B cell (primary cell): ENCODE measurements at regions of chr1 and their contacts with region 1.

Region 1: DNA sequence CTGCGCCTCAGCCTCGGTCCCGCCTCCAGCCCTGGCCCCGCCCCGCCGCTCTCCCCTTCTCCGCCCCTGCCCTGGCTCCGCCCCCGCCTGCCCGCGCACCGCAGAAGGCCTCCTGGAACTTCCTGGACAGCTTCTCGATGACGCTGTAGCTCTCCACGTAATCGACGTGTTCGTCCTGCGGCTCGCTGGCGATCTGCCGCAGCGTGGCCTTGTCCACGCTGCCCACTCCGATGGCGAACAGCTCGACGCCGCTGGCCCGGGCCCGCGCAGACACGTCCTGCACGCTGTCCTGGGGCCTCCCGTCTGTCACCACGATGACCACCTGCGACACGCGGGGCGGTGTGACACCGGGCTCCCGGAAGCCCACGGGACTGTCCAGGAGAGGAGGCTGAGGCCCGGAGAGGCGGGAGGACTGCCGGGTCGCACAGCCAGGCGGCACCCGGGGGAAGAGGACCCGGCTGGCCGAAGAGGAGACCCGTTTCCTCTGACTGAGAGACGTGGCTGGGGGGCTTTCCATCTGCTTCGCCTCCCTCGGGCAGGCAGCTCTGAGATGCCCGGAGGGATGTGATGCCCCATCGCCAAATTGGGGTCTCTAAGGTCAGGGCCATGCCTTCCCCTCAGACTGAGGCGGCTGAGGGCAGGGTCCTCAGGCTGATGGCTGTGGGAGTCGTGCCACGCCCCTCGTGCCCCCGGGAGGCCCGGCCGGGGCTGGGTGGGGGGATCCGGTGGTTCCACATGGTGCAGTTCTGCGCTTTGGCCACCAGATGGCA is 4.6 kb downstream of the MATN1 start:
- DNase-seq: peak; percentile 98
- ATAC-seq: peak; percentile 64
- H3K4me3 ChIP-seq: peak overlapping the region; percentile 7 to 96 (median 92)
- H3K4me3 Mint-ChIP-seq: peak overlapping the region; percentile 88
- H3K27ac ChIP-seq: peak overlapping the region; percentile 99 to 100
- H3K27ac Mint-ChIP-seq: peak overlapping the region; percentile 94
- H3K4me1 ChIP-seq: peaks cover 18 to 54% of the 10 kb centered on the region in 2 donors
- H3K4me1 Mint-ChIP-seq: peaks cover 44% of the 10 kb centered on the region
- H3K27me3 ChIP-seq: no peaks in the 10 kb centered on the region
- H3K27me3 Mint-ChIP-seq: no peaks in the 10 kb centered on the region
- CTCF ChIP-seq: no peak

Region 2: DNA sequence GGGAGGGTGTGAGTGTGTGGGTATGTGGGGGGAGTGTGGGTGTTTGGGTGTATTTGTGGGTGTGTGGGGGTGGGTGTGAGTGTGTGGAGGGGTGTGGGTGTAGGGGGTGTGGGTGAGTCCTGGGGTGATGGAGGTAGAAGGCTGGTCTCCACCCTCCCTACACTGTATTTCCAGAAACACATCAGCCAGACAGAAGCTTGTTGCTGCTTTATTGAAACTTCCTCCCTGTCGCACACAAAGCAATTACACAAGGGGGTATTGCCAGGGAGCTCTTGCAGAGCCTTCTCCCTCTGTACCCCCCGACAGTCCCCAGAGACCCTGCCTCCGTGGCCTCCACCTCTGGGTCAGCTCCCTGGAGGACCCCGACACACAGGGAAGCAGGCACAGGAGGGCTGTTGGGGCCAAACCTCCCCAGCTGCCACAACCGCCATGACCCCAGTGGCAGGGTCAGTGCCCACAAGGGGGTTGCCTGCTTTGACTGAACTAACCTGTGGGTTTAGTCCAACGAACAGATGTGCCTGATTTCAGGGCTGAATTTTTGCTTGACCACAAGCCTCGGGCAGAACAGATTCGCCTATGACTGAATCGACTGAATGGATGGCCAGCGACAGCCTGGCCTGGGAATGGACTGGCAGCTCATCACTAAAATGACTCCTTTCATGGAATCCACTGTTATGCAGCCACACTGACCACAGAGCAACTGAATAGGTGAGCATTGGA is 13.6 kb after region 1 on chr1:
- CTCF ChIA-PET with region 1: interaction called, 78 read pairs
- POLR2A ChIA-PET with region 1: interaction called, 30 read pairs
- intact Hi-C with region 1: no loop called
- DNase-seq: peak; percentile 76
- ATAC-seq: peak; percentile 50
- H3K4me3 ChIP-seq: no peak overlapping the region
- H3K4me3 Mint-ChIP-seq: peak overlapping the region; percentile 19
- H3K27ac ChIP-seq: peak overlapping the region; percentile 70 to 82
- H3K27ac Mint-ChIP-seq: peak overlapping the region; percentile 94
- H3K4me1 ChIP-seq: peaks cover 41 to 59% of the 10 kb centered on the region in 2 donors
- H3K4me1 Mint-ChIP-seq: peaks cover 75% of the 10 kb centered on the region
- H3K27me3 ChIP-seq: no peaks in the 10 kb centered on the region
- H3K27me3 Mint-ChIP-seq: no peaks in the 10 kb centered on the region
- CTCF ChIP-seq: no peak

Region 3: DNA sequence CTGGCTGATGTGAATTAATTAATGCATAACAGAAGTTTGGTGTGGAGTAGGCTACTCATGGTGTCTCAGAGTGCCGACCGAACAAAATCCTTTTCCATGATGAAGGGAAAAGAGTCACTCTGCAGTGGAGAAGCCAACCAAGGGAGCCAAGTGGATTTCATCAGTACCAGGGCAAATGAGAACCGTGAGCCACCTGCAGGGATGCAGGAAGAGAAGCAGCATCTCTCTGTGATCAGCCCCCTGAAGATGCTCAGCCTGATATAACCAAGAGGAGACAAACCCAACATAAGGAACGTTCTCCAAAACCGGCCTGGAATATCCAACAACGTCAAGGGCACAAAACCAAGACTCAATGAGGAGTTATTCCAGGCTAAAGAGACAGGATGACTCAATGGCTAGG is 52.2 kb after region 1 on chr1:
- CTCF ChIA-PET with region 1: interaction called, 769 read pairs
- POLR2A ChIA-PET with region 1: interaction called, 4 read pairs
- intact Hi-C with region 1: no loop called
- DNase-seq: no peak
- ATAC-seq: no peak
- H3K4me3 ChIP-seq: no peak overlapping the region
- H3K4me3 Mint-ChIP-seq: no peak overlapping the region
- H3K27ac ChIP-seq: no peak overlapping the region
- H3K27ac Mint-ChIP-seq: no peak overlapping the region
- H3K4me1 ChIP-seq: peaks cover 2% of the 10 kb centered on the region in 2 donors
- H3K4me1 Mint-ChIP-seq: peaks cover 20% of the 10 kb centered on the region
- H3K27me3 ChIP-seq: no peaks in the 10 kb centered on the region
- H3K27me3 Mint-ChIP-seq: no peaks in the 10 kb centered on the region
- CTCF ChIP-seq: no peak

Region 4: DNA sequence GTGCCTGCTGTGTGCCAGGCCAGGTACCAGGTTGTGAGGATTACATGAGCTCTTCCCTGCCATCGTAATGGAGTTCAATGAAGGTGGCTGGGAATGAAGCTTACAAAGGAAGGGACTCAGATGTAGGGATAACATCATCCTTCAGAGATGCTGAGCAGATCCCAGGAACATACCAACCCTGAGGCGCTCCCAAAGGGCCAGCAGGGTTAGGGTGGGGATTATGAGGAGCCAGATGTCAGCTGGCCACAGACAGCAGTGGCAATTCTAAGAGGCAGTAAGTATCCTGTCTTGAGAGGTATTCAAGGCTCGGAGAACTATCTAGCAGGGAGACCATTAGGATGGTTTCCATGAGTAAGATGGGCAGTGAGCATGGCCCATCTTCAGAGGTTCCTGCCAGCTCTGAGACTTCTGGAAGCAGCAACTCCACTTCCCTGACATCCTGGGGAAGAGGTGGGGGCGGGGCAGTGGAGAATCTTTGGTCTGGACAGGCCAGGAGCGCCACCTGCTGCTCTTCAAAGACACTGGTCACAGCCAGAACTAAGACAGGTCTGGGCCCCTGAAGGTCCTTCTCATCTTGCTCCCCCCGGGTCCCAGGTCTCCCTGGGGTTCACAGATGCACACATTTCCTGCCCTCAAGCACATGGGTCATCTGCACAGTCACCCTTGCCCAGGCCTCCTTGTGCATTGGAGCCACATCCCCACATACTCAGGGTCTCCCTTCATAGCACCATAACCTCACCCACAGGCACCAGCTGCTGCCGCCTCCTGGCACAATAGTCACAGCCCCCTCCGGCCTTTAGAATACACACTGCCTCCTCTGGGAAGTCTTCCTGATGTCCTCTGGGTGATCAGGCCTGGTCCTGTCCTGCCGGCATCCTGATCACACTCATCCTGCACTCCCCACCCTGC is 192.5 kb after region 1 on chr1:
- CTCF ChIA-PET with region 1: interaction called, 94 read pairs
- POLR2A ChIA-PET with region 1: interaction called, 4 read pairs
- intact Hi-C with region 1: loop called (anchors 1 kb)
- DNase-seq: peak; percentile 74
- ATAC-seq: peak; percentile 57
- H3K4me3 ChIP-seq: no peak overlapping the region
- H3K4me3 Mint-ChIP-seq: no peak overlapping the region
- H3K27ac ChIP-seq: no peak overlapping the region
- H3K27ac Mint-ChIP-seq: no peak overlapping the region
- H3K4me1 ChIP-seq: peaks cover 30 to 31% of the 10 kb centered on the region in 2 donors
- H3K4me1 Mint-ChIP-seq: peaks cover 29% of the 10 kb centered on the region
- H3K27me3 ChIP-seq: peaks cover 0 to 40% (median 18%) of the 10 kb centered on the region in 4 experiments
- H3K27me3 Mint-ChIP-seq: peaks cover 32% of the 10 kb centered on the region
- CTCF ChIP-seq: peak; percentile 72

Region 5: DNA sequence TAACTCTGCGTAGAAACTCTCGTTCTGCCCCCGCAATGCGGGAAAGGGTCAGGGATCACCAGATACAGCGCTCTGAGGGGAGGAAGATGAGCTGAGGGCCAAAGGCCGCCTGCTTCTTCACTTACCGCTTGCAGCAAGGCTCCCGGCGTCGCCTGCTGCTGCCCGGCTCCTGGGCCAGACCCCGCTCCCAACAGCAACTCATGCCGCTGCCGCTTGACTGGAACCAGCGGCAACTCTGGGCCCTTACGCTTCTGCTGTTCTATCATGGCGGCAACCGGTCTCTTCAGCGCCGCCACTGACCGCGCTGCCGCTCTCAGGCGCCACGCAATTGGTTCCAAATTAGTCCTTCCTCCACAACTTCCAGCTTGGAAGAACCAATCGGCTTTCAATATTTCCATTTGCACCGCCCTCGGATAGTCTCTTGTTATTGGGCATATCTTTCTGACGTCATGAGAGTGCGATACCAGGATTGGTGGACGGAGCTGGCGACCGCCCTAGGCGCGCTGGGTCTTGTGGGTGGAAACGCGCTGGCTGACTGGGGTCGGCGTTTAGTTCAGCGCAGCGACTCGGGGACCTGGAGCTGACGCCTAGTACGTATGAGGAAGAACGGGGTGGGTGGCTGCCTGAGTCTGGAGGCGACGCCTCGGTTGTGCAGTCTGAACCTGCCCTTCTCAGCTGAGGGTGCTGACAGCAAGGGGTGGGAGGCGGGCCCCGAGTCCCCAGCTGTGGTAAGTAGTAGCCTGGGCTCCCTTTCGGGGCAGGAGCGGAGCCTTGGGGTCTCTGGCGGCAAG is 577.9 kb after region 1 on chr1 and contains the starts of genes SNRNP40 and ZCCHC17:
- CTCF ChIA-PET with region 1: no interaction called
- POLR2A ChIA-PET with region 1: no interaction called
- intact Hi-C with region 1: loop called (anchors 2 kb)
- DNase-seq: peak; percentile 98
- ATAC-seq: peak; percentile 97
- H3K4me3 ChIP-seq: peak within 1 kb of the TSS; percentile 68 to 99 (median 77)
- H3K4me3 Mint-ChIP-seq: no peak within 1 kb of the TSS
- H3K27ac ChIP-seq: peak within 1 kb of the TSS; percentile 82 to 93
- H3K27ac Mint-ChIP-seq: peak within 1 kb of the TSS; percentile 63
- H3K4me1 ChIP-seq: peaks cover 23 to 25% of the 10 kb centered on the region in 2 donors
- H3K4me1 Mint-ChIP-seq: peaks cover 24% of the 10 kb centered on the region
- H3K27me3 ChIP-seq: no peaks in the 10 kb centered on the region
- H3K27me3 Mint-ChIP-seq: no peaks in the 10 kb centered on the region
- CTCF ChIP-seq: no peak
- total RNA-seq, gene SNRNP40: 65.6 and 67.7 TPM in 2 replicates
- total RNA-seq, gene ZCCHC17: 20.3 and 21.5 TPM in 2 replicates

Region 6: GRCh38 chr1:31644560-31645273 is 925.9 kb after region 1 on chr1 and contains the start of gene PEF1:
- CTCF ChIA-PET with region 1: no interaction called
- POLR2A ChIA-PET with region 1: no interaction called
- intact Hi-C with region 1: loop called (anchors 10 kb)
- DNase-seq: peak; percentile 100
- ATAC-seq: peak; percentile 93
- H3K4me3 ChIP-seq: peak within 1 kb of the TSS; percentile 70 to 98 (median 95)
- H3K4me3 Mint-ChIP-seq: peak within 1 kb of the TSS; percentile 98
- H3K27ac ChIP-seq: peak within 1 kb of the TSS; percentile 98 to 99
- H3K27ac Mint-ChIP-seq: peak within 1 kb of the TSS; percentile 99
- H3K4me1 ChIP-seq: peaks cover 17 to 19% of the 10 kb centered on the region in 2 donors
- H3K4me1 Mint-ChIP-seq: peaks cover 31% of the 10 kb centered on the region
- H3K27me3 ChIP-seq: no peaks in the 10 kb centered on the region
- H3K27me3 Mint-ChIP-seq: no peaks in the 10 kb centered on the region
- CTCF ChIP-seq: no peak
- total RNA-seq, gene PEF1: 36.7 and 46.9 TPM in 2 replicates